ENCODE measurements at regions of chr3 and their contacts with region 1.

Region 1: GRCh38 chr3:193078996-193079753 is 161.5 kb upstream of the MB21D2 start:
- DNase-seq: no peak
- H3K4me3 ChIP-seq: no peak overlapping the region
- H3K27ac ChIP-seq: no peak overlapping the region
- H3K4me1 ChIP-seq: no peaks in the 10 kb centered on the region
- H3K27me3 ChIP-seq: no peaks in the 10 kb centered on the region
- CTCF ChIP-seq: no peak

Region 2: GRCh38 chr3:193016437-193016901 is 62.7 kb before region 1 on chr3:
- CTCF ChIA-PET with region 1: no interaction called
- POLR2A ChIA-PET with region 1: no interaction called
- intact Hi-C with region 1: no loop called
- DNase-seq: peak; percentile 21
- H3K4me3 ChIP-seq: no peak overlapping the region
- H3K27ac ChIP-seq: no peak overlapping the region
- H3K4me1 ChIP-seq: no peaks in the 10 kb centered on the region
- H3K27me3 ChIP-seq: no peaks in the 10 kb centered on the region
- CTCF ChIP-seq: no peak

Region 3: GRCh38 chr3:193095366-193095765 is 16.2 kb after region 1 on chr3:
- CTCF ChIA-PET with region 1: no interaction called
- POLR2A ChIA-PET with region 1: interaction called, 17 read pairs
- intact Hi-C with region 1: no loop called
- DNase-seq: no peak
- H3K4me3 ChIP-seq: no peak overlapping the region
- H3K27ac ChIP-seq: no peak overlapping the region
- H3K4me1 ChIP-seq: no peaks in the 10 kb centered on the region
- H3K27me3 ChIP-seq: no peaks in the 10 kb centered on the region
- CTCF ChIP-seq: no peak

Region 4: DNA sequence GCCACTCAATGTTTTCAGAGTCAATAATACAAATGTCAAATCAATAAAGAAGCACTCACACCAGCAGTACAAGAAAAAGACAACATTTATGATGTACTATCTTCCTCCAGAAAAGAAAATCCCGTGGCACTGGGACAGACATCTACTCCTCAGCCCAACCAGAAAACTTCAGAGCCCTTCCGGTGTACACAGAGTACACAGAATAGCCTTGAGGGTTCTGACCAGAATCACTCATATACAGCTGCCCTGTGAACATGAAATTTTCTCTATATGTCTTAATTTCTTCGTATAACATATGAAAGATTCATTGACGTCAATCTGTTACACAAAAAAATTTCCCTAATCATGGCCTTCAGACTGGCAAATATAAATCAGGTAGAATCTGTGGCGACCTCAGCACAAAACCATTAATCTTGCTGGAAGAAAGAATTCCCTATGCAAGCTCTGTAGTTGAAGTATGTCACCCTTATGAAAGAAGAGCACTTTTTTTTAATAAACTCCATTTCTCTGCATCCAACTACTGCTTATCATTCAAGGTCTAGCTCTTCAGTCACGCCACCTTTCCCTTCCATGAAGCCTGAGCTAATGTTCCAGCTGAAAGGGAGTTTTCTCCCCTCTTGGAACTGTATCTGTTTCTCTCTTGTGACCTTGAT is 108.0 kb after region 1 on chr3:
- CTCF ChIA-PET with region 1: no interaction called
- POLR2A ChIA-PET with region 1: no interaction called
- intact Hi-C with region 1: no loop called
- DNase-seq: no peak
- H3K4me3 ChIP-seq: no peak overlapping the region
- H3K27ac ChIP-seq: no peak overlapping the region
- H3K4me1 ChIP-seq: no peaks in the 10 kb centered on the region
- H3K27me3 ChIP-seq: no peaks in the 10 kb centered on the region
- CTCF ChIP-seq: no peak

Region 5: DNA sequence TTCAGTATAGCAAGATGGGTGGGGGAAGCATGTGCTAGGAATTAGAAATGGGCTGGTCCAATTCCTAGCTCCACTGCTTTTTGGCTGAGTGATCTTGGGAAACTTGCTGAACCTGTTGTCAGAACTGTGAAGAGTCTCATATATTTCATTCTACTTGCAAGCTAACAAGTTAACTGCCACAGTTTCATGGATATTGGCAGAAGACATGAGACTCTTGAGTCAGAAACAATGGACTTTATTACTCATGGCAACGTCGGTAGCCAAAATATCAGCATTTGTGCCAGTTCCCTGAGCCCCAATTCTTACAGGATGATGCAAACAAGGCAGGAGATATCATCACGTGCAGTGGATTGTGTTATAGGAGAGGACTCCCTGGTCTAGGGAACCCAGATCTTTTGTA is 135.3 kb after region 1 on chr3:
- CTCF ChIA-PET with region 1: no interaction called
- POLR2A ChIA-PET with region 1: no interaction called
- intact Hi-C with region 1: no loop called
- DNase-seq: no peak
- H3K4me3 ChIP-seq: no peak overlapping the region
- H3K27ac ChIP-seq: no peak overlapping the region
- H3K4me1 ChIP-seq: no peaks in the 10 kb centered on the region
- H3K27me3 ChIP-seq: peaks cover 7% of the 10 kb centered on the region
- CTCF ChIP-seq: no peak

Measured in A673 (cell line).